ENCODE measurements at regions of chr13 and their contacts with region 1.

Region 1: DNA sequence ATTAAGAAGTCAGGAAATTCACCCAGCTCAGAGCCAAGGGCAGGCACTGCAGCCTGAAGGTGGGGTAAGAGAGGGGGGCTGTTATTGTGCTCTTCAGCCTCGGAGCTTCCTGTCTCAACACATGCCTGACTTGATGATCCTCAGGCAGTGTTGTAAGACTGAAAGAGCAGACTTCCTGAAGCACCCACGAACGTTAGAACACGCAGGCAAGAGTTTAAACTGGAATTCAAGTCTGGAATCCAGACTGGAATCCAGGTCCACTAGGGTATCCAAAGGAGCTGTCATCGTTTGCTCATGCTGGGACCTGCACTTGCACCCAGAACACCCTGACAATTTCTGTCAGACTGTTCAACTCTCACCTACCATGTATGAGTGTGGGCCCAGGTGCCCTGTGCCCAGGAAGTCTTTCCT is 10.7 kb upstream of the FLT1 start:
- DNase-seq: peak in 5 of 9 donors; percentile 45 to 59 (median 50)
- ATAC-seq: peak; percentile 83
- H3K4me3 ChIP-seq: no peak overlapping the region
- H3K4me3 Mint-ChIP-seq: peak overlapping the region in 6 of 10 donors; percentile 13 to 59 (median 50)
- H3K27ac ChIP-seq: no peak overlapping the region
- H3K27ac Mint-ChIP-seq: peak overlapping the region in 8 of 9 donors; percentile 39 to 88 (median 79)
- H3K4me1 ChIP-seq: no peaks in the 10 kb centered on the region
- H3K4me1 Mint-ChIP-seq: peaks cover 7 to 14% (median 10%) of the 10 kb centered on the region in 7 donors
- H3K27me3 ChIP-seq: no peaks in the 10 kb centered on the region
- H3K27me3 Mint-ChIP-seq: peaks cover 0 to 14% (median 0%) of the 10 kb centered on the region in 5 donors

Region 2: GRCh38 chr13:28531077-28531844 is 25.6 kb after region 1 on chr13:
- CTCF ChIA-PET with region 1: interaction called, 3 read pairs
- POLR2A ChIA-PET with region 1: no interaction called
- intact Hi-C with region 1: loop called in 1 of 2 experiments (anchors 1 kb)
- DNase-seq: no peak
- ATAC-seq: no peak
- H3K4me3 ChIP-seq: no peak overlapping the region
- H3K4me3 Mint-ChIP-seq: no peak overlapping the region
- H3K27ac ChIP-seq: no peak overlapping the region
- H3K27ac Mint-ChIP-seq: no peak overlapping the region
- H3K4me1 ChIP-seq: peaks cover 0 to 9% of the 10 kb centered on the region in 2 donors
- H3K4me1 Mint-ChIP-seq: peaks cover 0 to 6% (median 0%) of the 10 kb centered on the region in 7 donors
- H3K27me3 ChIP-seq: peaks cover 0 to 24% of the 10 kb centered on the region in 2 donors
- H3K27me3 Mint-ChIP-seq: peaks cover 36 to 50% (median 38%) of the 10 kb centered on the region in 5 donors

Region 3: GRCh38 chr13:28541978-28542377 is 36.3 kb after region 1 on chr13:
- CTCF ChIA-PET with region 1: no interaction called
- POLR2A ChIA-PET with region 1: no interaction called
- intact Hi-C with region 1: no loop called
- DNase-seq: no peak
- ATAC-seq: no peak
- H3K4me3 ChIP-seq: no peak overlapping the region
- H3K4me3 Mint-ChIP-seq: no peak overlapping the region
- H3K27ac ChIP-seq: no peak overlapping the region
- H3K27ac Mint-ChIP-seq: no peak overlapping the region
- H3K4me1 ChIP-seq: no peaks in the 10 kb centered on the region
- H3K4me1 Mint-ChIP-seq: peaks cover 0 to 9% (median 0%) of the 10 kb centered on the region in 7 donors
- H3K27me3 ChIP-seq: no peaks in the 10 kb centered on the region
- H3K27me3 Mint-ChIP-seq: peaks cover 0 to 38% (median 22%) of the 10 kb centered on the region in 5 donors

Region 4: GRCh38 chr13:29605860-29606526 is 1100.3 kb after region 1 on chr13:
- CTCF ChIA-PET with region 1: no interaction called
- POLR2A ChIA-PET with region 1: no interaction called
- intact Hi-C with region 1: no loop called
- DNase-seq: no peak
- ATAC-seq: no peak
- H3K4me3 ChIP-seq: no peak overlapping the region
- H3K4me3 Mint-ChIP-seq: no peak overlapping the region
- H3K27ac ChIP-seq: no peak overlapping the region
- H3K27ac Mint-ChIP-seq: no peak overlapping the region
- H3K4me1 ChIP-seq: no peaks in the 10 kb centered on the region
- H3K4me1 Mint-ChIP-seq: no peaks in the 10 kb centered on the region
- H3K27me3 ChIP-seq: no peaks in the 10 kb centered on the region
- H3K27me3 Mint-ChIP-seq: peaks cover 0 to 33% (median 10%) of the 10 kb centered on the region in 5 donors

Measured in naive thymus-derived CD4-positive, alpha-beta T cell (primary cell).